ENCODE measurements at regions of chr20 and their contacts with region 1.

Region 1: DNA sequence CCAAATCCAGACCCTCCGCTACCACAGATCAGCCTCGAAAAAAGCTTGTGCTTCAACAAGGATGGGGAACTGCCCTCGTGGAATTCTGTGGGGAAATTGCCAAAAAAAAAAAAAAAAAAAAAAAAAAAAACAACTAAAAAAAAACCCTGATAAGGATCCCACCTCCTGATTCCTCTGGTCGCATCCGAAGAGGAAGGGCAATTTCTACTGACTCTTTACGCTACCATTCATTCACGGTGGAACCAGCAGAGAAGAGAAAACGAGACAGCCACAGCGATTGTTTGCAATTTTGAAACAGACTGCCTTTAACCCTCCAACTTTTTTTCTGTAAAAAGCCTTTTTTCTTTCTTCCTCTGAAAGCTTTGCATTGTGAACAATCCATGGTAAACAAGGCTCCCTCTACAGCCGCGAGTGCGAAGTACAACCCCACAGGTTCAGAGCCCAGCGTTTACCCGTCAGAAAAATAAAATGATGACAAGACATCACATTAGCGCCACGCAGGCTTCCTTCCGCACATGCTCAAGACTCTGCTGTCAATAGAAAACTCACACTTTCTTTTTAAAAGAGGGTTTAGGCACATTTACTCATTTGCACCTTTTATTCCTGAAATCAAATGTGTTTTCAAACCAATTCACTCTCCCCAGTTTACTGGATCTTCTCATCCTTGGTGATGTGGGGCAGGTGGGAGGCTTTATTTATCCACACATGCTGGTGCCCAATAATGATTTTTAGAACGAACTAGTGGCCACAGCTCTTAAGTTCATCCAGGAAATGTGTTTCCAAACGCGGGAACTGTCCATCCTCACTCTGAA is 100.0 kb downstream of the NOL4L start:
- DNase-seq: peak; percentile 87 to 88
- H3K4me3 ChIP-seq: peak overlapping the region; percentile 77
- H3K4me3 Mint-ChIP-seq: peak overlapping the region; percentile 93
- H3K27ac Mint-ChIP-seq: peak overlapping the region; percentile 84
- H3K4me1 ChIP-seq: peaks cover 32% of the 10 kb centered on the region
- H3K4me1 Mint-ChIP-seq: peaks cover 25% of the 10 kb centered on the region
- H3K27me3 ChIP-seq: no peaks in the 10 kb centered on the region
- H3K27me3 Mint-ChIP-seq: no peaks in the 10 kb centered on the region
- CTCF ChIP-seq: peak; percentile 98 to 99

Region 2: GRCh38 chr20:32466739-32467505 is 18.2 kb before region 1 on chr20:
- CTCF ChIA-PET with region 1: interaction called, 11 read pairs
- POLR2A ChIA-PET with region 1: no interaction called
- intact Hi-C with region 1: loop called (anchors 1 kb)
- DNase-seq: no peak
- H3K4me3 ChIP-seq: no peak overlapping the region
- H3K4me3 Mint-ChIP-seq: no peak overlapping the region
- H3K27ac Mint-ChIP-seq: peak overlapping the region; percentile 34
- H3K4me1 ChIP-seq: peaks cover 13% of the 10 kb centered on the region
- H3K4me1 Mint-ChIP-seq: peaks cover 20% of the 10 kb centered on the region
- H3K27me3 ChIP-seq: no peaks in the 10 kb centered on the region
- H3K27me3 Mint-ChIP-seq: no peaks in the 10 kb centered on the region
- CTCF ChIP-seq: no peak